Transverse colon (tissue), 4 donors: ENCODE measurements at regions of chr11 and their contacts with region 1.

Region 1: DNA sequence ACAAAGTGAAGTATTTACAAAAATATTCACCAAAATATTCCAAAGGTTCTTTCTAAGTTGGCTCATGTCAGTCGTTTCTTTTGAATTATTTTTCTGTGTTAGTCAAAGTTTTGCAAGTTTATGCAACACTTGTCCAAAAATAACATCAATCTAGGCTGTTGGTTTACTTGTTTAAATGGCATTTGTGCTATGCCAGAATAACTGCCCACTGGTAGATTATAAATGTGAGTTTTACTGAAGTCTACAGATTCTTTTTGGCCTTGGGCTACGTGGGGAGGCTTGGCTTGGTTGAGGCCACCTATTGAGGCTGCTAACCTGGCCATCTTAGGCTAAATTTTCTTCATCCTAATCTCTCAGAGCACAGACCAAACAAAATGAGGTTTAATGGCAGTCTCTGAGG is 1091.9 kb upstream of the RAG2 start:
- DNase-seq: no peak
- H3K4me3 ChIP-seq: no peak overlapping the region
- H3K27ac ChIP-seq: no peak overlapping the region
- H3K4me1 ChIP-seq: no peaks in the 10 kb centered on the region
- H3K27me3 ChIP-seq: no peaks in the 10 kb centered on the region
- CTCF ChIP-seq: no peak
- EP300 ChIP-seq: no peak
- POLR2A ChIP-seq: no peak

Region 2: DNA sequence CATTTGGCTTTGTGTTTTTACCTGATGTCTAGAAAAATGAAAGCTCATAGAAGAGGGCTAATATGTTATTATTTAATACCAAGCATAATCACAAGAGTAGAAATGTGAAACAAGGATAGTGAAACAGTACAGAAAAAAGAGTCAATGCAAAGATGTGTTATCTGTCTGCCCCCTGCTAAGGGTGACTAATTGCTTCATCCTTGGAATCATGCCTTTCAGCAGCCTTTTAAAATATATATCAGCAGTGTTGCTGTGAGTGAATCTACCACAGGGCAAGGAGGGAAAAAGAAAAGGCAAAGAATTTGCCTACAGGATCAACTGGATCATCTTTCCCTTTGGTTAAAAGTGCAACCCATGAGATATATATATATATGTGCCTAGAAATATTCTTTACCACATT is 224.7 kb before region 1 on chr11:
- in situ Hi-C with region 1: no loop called
- intact Hi-C with region 1: loop called (anchors 5 kb)
- DNase-seq: no peak
- H3K4me3 ChIP-seq: no peak overlapping the region
- H3K27ac ChIP-seq: no peak overlapping the region
- H3K4me1 ChIP-seq: no peaks in the 10 kb centered on the region
- H3K27me3 ChIP-seq: no peaks in the 10 kb centered on the region
- CTCF ChIP-seq: no peak
- EP300 ChIP-seq: no peak
- POLR2A ChIP-seq: no peak

Region 3: DNA sequence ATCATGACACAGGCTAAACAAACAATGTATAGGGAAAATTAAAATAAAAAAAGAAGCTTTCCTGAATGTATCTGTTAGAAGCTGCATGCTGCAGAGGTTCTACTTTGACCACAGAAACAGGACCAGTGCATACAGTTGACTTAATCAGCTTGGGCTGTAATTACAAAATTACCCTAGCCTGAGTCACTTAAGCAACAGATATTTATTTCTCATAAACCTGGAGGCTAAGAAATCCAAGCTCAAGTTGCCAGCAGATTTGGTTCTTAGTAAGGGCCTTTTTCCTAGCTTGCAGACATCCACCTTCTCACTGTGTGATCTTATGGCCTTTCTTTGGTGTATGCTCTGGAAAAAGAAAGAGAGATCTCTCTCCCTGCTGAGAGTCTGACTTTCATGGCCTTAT is 145.5 kb before region 1 on chr11:
- in situ Hi-C with region 1: no loop called
- intact Hi-C with region 1: no loop called
- DNase-seq: no peak
- H3K4me3 ChIP-seq: no peak overlapping the region
- H3K27ac ChIP-seq: no peak overlapping the region
- H3K4me1 ChIP-seq: no peaks in the 10 kb centered on the region
- H3K27me3 ChIP-seq: no peaks in the 10 kb centered on the region
- CTCF ChIP-seq: no peak
- EP300 ChIP-seq: no peak
- POLR2A ChIP-seq: no peak

Region 4: DNA sequence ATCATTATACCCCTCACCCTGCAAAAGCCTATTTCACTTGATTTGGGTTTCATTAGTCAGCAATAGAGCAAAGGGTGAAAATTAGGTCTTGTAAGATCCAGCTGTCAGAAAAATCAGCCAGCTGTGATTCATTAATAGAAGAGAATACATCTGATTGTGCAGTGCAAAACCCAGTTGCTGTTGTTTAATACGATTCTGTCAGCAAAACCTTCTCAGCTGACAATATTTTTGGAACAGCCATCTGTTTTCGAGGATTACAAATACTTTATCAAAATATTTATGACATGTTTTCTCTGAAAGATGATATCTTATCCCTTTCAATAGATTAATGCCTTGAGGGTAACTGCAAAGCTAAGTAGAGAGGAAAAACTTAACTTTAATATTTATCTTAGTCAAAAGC is 262.0 kb after region 1 on chr11:
- in situ Hi-C with region 1: no loop called
- intact Hi-C with region 1: no loop called
- DNase-seq: no peak
- H3K4me3 ChIP-seq: no peak overlapping the region
- H3K27ac ChIP-seq: no peak overlapping the region
- H3K4me1 ChIP-seq: no peaks in the 10 kb centered on the region
- H3K27me3 ChIP-seq: no peaks in the 10 kb centered on the region
- CTCF ChIP-seq: no peak
- EP300 ChIP-seq: no peak
- POLR2A ChIP-seq: no peak